ENCODE measurements at regions of chr11 and their contacts with region 1.

Region 1: GRCh38 chr11:10735481-10736475 is 15.3 kb upstream of the CTR9 start:
- DNase-seq: peak; percentile 81 to 98
- H3K4me3 ChIP-seq: peak overlapping the region; percentile 29 to 44
- H3K27ac ChIP-seq: peak overlapping the region; percentile 75 to 84
- H3K4me1 ChIP-seq: peaks cover 0 to 25% of the 10 kb centered on the region in 2 donors
- H3K27me3 ChIP-seq: no peaks in the 10 kb centered on the region
- CTCF ChIP-seq: peak; percentile 99

Region 2: DNA sequence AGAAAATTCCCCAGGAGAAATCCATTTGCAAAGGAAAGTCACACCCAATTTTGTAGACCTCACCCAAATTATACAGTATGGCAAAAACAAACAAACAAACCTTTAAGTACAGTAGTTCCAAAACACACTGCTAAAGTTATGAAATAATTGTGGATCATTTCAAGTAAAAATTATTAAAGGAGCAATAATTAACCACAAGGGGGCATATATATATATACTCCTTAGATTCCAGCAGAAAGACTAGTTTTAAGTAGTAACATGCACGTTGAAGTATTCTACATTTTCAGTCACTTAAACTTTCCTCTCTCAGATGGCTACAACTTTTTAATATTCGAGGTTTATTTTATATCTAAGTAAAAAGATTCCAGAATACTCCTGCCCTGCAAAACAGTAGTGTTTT is 221.6 kb before region 1 on chr11:
- intact Hi-C with region 1: loop called (anchors 1 kb)
- DNase-seq: no peak
- H3K4me3 ChIP-seq: no peak overlapping the region
- H3K27ac ChIP-seq: peak overlapping the region; percentile 23 to 41
- H3K4me1 ChIP-seq: peaks cover 0 to 33% of the 10 kb centered on the region in 2 donors
- H3K27me3 ChIP-seq: no peaks in the 10 kb centered on the region
- CTCF ChIP-seq: peak; percentile 20 to 42 (median 29)

Region 3: DNA sequence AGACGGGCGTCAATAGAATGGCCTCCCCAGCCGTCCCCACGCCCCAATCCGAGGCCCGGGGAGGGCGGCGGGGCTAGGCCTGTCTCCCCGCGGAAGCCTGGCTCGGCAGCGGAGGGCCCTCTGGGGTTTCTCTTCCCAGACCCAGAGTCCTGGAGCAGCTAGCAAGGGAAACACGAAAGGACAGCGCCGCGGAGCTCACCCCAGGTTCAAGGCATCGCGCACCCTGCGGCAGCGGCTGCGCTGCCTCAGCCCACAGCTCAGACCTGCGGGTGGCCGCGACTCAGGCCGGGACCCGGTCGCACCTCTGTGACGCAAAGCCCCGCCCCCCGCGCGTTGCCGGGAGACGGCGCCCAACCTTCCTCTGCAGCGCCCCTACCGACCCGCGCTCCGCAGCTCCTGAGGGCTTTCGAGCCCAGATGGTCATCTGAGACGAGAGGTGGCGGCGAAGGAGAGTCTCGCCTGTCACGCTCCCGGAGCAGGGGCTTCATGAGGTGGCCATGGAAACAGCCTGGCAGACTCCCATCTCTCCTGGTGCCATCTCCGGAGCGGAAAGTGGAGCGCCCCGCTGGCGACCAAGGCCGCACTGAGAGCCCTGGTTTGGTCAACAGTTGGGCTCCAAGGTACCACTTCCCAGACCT is 194.7 kb before region 1 on chr11 and contains the start of gene RNF141:
- intact Hi-C with region 1: loop called (anchors 1 kb)
- DNase-seq: peak; percentile 79 to 97
- H3K4me3 ChIP-seq: peak within 1 kb of the TSS; percentile 63 to 88
- H3K27ac ChIP-seq: peak within 1 kb of the TSS; percentile 93 to 94
- H3K4me1 ChIP-seq: peaks cover 0 to 32% of the 10 kb centered on the region in 2 donors
- H3K27me3 ChIP-seq: no peaks in the 10 kb centered on the region
- CTCF ChIP-seq: peak; percentile 85 to 95 (median 91)
- total RNA-seq, gene RNF141: 10.9 TPM

Region 4: DNA sequence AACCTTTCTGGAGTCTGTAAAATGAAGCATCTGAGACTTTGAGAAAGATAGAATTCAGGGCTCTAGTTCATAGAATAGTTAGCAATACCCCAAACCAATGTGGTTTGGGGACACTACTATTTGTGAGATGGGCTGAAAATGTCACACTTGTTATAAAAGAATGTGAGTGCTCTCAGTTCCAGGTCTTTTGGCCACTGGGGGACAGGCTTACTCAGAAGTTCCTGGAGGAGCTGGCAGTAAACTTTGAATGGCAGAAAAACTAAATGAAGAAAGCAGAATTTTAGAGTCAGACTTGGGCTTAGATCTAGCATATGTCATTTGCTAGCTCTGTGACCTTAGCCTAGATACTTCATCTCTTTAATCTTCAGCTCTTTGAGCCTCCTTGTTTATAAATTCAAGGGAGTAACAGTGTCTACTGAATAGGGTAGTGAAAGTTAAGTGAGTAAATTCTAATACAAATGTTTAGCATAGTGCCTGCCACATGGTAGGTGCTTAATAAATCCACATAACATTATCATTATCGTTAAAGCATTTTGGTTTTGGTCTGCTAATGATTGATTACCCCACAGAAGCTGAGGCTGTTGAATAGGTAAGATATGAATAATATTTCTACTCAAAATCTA is 171.0 kb before region 1 on chr11:
- intact Hi-C with region 1: loop called (anchors 2 kb)
- DNase-seq: no peak
- H3K4me3 ChIP-seq: peak overlapping the region in 1 of 2 donors; percentile 10
- H3K27ac ChIP-seq: peak overlapping the region; percentile 78 to 82
- H3K4me1 ChIP-seq: peaks cover 0 to 28% of the 10 kb centered on the region in 2 donors
- H3K27me3 ChIP-seq: no peaks in the 10 kb centered on the region
- CTCF ChIP-seq: peak; percentile 44 to 60 (median 46)

Region 5: DNA sequence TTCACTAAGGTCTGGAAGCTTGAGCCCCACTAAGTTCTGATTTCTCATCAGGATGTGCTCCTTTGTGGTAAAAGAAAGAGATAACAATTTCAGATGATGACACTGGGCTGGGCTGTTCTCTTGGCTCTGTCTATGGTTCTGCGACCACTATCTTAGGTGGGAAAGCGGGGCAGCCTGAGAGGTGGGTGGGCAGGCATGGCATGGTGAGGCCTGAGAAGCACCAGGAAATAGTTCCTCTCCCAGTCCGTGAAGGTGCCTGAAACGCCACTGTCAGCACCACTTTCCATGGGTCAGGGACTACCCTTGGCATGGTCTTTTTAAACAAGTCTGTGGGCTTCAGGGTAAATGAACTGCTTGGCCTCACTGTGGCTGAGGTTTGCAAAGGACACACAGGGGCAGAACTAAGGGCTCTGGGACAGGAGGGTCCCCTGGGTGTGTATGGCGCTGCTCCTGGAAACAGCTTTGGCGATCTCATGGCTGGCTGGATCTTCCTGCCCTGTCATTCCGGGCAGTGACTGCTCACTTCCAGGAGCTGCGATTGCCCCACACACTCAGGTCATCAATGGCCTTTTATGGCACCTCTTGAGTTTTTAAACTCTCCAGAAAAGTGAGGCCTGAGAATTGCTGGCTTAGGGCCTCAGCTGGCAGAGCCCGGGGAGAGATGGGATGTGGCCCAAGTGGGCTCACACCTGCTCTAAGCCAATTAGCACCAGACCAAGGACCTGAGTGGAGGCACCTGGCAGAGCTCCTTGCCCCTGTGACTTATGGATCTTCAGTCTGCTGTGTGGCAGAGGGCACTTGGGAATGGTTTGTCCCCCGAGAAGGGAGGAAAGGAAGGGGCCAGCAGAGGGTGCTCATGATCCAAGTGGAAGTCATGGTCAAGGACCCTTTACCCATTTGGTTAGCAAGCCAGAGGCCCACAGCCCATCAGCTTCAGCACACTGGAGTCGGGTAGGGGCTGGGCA is 111.7 kb before region 1 on chr11:
- intact Hi-C with region 1: loop called (anchors 1 kb)
- DNase-seq: peak in 1 of 2 donors; percentile 85
- H3K4me3 ChIP-seq: no peak overlapping the region
- H3K27ac ChIP-seq: peak overlapping the region; percentile 82 to 97
- H3K4me1 ChIP-seq: peaks cover 32 to 46% of the 10 kb centered on the region in 2 donors
- H3K27me3 ChIP-seq: no peaks in the 10 kb centered on the region
- CTCF ChIP-seq: peak; percentile 39 to 46 (median 40)